ENCODE measurements at regions of chr4 and their contacts with region 1.

Region 1: GRCh38 chr4:123555233-123555806 is 158.7 kb downstream of the SPRY1 start:
- DNase-seq: peak; percentile 68
- ATAC-seq: peak; percentile 84 to 86
- H3K4me3 ChIP-seq: peak overlapping the region in 2 of 4 donors; percentile 4 to 37
- H3K27ac ChIP-seq: peak overlapping the region; percentile 38 to 74 (median 54)
- H3K4me1 ChIP-seq: peaks cover 15 to 17% of the 10 kb centered on the region in 2 donors
- H3K27me3 ChIP-seq: no peaks in the 10 kb centered on the region
- CTCF ChIP-seq: no peak
- POLR2A ChIP-seq: no peak

Region 2: GRCh38 chr4:123505095-123506010 is 50.0 kb before region 1 on chr4:
- in situ Hi-C with region 1: no loop called
- intact Hi-C with region 1: loop called (anchors 5 kb)
- DNase-seq: peak in 1 of 2 donors; percentile 19
- ATAC-seq: peak; percentile 57 to 67
- H3K4me3 ChIP-seq: peak overlapping the region; percentile 54 to 71 (median 59)
- H3K27ac ChIP-seq: peak overlapping the region; percentile 3 to 63 (median 49)
- H3K4me1 ChIP-seq: peaks cover 7 to 11% of the 10 kb centered on the region in 2 donors
- H3K27me3 ChIP-seq: no peaks in the 10 kb centered on the region
- CTCF ChIP-seq: no peak
- POLR2A ChIP-seq: no peak

Measured in gastrocnemius medialis (tissue), 4 donors.